Naive thymus-derived CD4-positive, alpha-beta T cell (primary cell): ENCODE measurements at regions of chr4 and their contacts with region 1.

Region 1: DNA sequence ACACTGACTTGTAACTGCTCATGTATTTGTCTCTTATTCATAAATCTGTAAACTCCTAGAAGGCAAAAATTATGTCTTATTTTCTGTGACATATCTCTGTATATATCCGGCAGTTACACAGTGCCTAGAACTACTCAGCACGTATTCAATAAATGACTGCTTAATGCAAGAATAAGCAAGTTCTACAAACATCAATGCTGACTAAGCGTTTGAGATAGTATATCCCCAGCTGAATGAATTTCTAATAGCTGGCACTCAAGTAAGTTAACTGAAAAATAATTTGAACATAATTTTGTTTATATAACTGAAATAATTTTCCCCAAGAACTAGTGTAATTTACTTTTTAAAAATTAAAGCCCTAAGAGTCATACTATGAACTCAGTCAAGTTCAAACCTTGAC is 113.7 kb downstream of the ARAP2 start:
- DNase-seq: no peak
- ATAC-seq: no peak
- H3K4me3 ChIP-seq: no peak overlapping the region
- H3K4me3 Mint-ChIP-seq: no peak overlapping the region
- H3K27ac ChIP-seq: no peak overlapping the region
- H3K27ac Mint-ChIP-seq: peak overlapping the region in 1 of 9 donors; percentile 59
- H3K4me1 ChIP-seq: no peaks in the 10 kb centered on the region
- H3K4me1 Mint-ChIP-seq: peaks cover 0 to 12% (median 0%) of the 10 kb centered on the region in 7 donors
- H3K27me3 ChIP-seq: no peaks in the 10 kb centered on the region
- H3K27me3 Mint-ChIP-seq: no peaks in the 10 kb centered on the region

Region 2: GRCh38 chr4:36152735-36153134 is 22.1 kb after region 1 on chr4:
- CTCF ChIA-PET with region 1: no interaction called
- POLR2A ChIA-PET with region 1: no interaction called
- intact Hi-C with region 1: loop called in 1 of 2 experiments (anchors 2 kb)
- DNase-seq: no peak
- ATAC-seq: no peak
- H3K4me3 ChIP-seq: no peak overlapping the region
- H3K4me3 Mint-ChIP-seq: no peak overlapping the region
- H3K27ac ChIP-seq: no peak overlapping the region
- H3K27ac Mint-ChIP-seq: no peak overlapping the region
- H3K4me1 ChIP-seq: no peaks in the 10 kb centered on the region
- H3K4me1 Mint-ChIP-seq: peaks cover 0 to 11% (median 4%) of the 10 kb centered on the region in 7 donors
- H3K27me3 ChIP-seq: no peaks in the 10 kb centered on the region
- H3K27me3 Mint-ChIP-seq: no peaks in the 10 kb centered on the region

Region 3: DNA sequence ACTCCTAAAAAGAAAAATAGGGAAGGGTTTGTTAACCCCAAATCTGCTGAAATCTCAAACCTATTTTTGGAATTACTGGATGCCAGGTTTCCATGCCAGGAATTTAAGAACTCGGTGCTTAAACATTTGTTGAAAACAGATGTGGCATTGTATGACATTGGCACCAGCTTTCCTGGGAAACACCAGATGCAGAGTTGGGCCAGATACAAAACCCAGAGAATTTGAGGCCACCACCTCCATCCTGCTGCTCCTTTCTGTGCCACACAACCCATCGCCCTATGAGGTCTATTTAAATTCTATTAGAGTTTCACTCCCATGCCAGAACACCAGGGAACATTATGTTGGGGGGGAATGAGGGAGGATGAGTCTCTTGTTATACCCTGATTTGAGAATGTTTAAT is 42.0 kb after region 1 on chr4:
- CTCF ChIA-PET with region 1: no interaction called
- POLR2A ChIA-PET with region 1: no interaction called
- intact Hi-C with region 1: no loop called
- DNase-seq: no peak
- ATAC-seq: no peak
- H3K4me3 ChIP-seq: no peak overlapping the region
- H3K4me3 Mint-ChIP-seq: no peak overlapping the region
- H3K27ac ChIP-seq: no peak overlapping the region
- H3K27ac Mint-ChIP-seq: no peak overlapping the region
- H3K4me1 ChIP-seq: no peaks in the 10 kb centered on the region
- H3K4me1 Mint-ChIP-seq: peaks cover 0 to 7% (median 0%) of the 10 kb centered on the region in 7 donors
- H3K27me3 ChIP-seq: no peaks in the 10 kb centered on the region
- H3K27me3 Mint-ChIP-seq: no peaks in the 10 kb centered on the region

Region 4: GRCh38 chr4:36414248-36414647 is 283.6 kb after region 1 on chr4:
- CTCF ChIA-PET with region 1: no interaction called
- POLR2A ChIA-PET with region 1: no interaction called
- intact Hi-C with region 1: no loop called
- DNase-seq: peak in 1 of 9 donors; percentile 4
- ATAC-seq: no peak
- H3K4me3 ChIP-seq: no peak overlapping the region
- H3K4me3 Mint-ChIP-seq: no peak overlapping the region
- H3K27ac ChIP-seq: no peak overlapping the region
- H3K27ac Mint-ChIP-seq: no peak overlapping the region
- H3K4me1 ChIP-seq: no peaks in the 10 kb centered on the region
- H3K4me1 Mint-ChIP-seq: no peaks in the 10 kb centered on the region
- H3K27me3 ChIP-seq: peaks cover 0 to 4% of the 10 kb centered on the region in 2 donors
- H3K27me3 Mint-ChIP-seq: peaks cover 31 to 51% (median 40%) of the 10 kb centered on the region in 5 donors

Region 5: DNA sequence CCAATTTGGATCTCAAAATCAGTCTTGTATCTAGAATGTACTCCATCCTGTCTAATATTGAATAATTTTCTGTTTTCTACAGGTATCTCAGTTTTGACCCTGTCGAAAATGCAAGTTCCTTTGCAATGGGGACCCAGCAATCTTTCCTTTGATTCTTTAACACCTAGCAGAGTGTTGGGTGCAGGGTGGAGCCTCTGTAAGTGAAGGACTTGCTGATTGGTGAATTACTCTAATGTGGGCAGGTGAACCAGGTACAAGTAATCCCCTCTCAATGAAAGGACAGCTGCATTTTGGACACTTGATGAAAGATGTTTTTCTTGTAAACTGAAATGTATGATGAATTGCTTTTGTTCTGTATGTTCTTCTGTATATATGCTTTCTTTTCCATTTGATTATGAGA is 1168.8 kb after region 1 on chr4:
- CTCF ChIA-PET with region 1: no interaction called
- POLR2A ChIA-PET with region 1: no interaction called
- intact Hi-C with region 1: no loop called
- DNase-seq: no peak
- ATAC-seq: no peak
- H3K4me3 ChIP-seq: no peak overlapping the region
- H3K4me3 Mint-ChIP-seq: no peak overlapping the region
- H3K27ac ChIP-seq: no peak overlapping the region
- H3K27ac Mint-ChIP-seq: no peak overlapping the region
- H3K4me1 ChIP-seq: no peaks in the 10 kb centered on the region
- H3K4me1 Mint-ChIP-seq: no peaks in the 10 kb centered on the region
- H3K27me3 ChIP-seq: no peaks in the 10 kb centered on the region
- H3K27me3 Mint-ChIP-seq: peaks cover 0 to 17% (median 7%) of the 10 kb centered on the region in 5 donors